Caco-2 (cell line): ENCODE measurements at regions of chr4 and their contacts with region 1.

Region 1: DNA sequence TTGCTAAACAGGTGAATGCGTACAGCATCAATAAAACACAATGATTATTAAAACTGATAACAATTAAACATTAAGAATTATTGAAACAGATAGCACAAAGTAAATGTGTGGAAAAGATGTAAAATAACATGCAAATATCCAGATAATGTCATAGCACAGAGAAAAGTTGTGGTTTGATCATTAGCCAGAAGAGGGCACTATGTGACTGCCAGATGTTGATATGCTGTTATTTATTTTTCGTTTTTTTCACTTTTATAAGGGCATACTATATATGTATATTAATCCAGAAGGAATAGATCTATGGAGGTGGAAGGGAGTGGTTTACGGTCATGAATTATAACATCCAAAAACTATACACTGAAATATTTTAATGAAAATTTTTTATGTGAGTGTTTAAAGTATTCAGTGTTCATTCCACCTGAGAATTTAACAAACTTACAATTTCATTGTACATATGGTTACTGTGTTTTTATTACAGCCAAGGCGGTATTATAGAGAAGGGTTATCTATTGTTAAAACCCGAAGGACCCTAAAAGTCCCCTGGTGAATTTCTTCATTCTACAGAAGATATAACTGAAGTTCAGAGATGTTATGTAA is 211.9 kb upstream of the UGT8 start:
- DNase-seq: peak in 1 of 2 experiments; percentile 24
- H3K4me3 ChIP-seq: no peak overlapping the region
- H3K4me3 Mint-ChIP-seq: no peak overlapping the region
- H3K27ac Mint-ChIP-seq: no peak overlapping the region
- H3K4me1 ChIP-seq: no peaks in the 10 kb centered on the region
- H3K4me1 Mint-ChIP-seq: no peaks in the 10 kb centered on the region
- H3K27me3 ChIP-seq: no peaks in the 10 kb centered on the region
- H3K27me3 Mint-ChIP-seq: no peaks in the 10 kb centered on the region
- CTCF ChIP-seq: peak; percentile 56 to 65

Region 2: GRCh38 chr4:113547487-113548042 is 839.2 kb before region 1 on chr4:
- CTCF ChIA-PET with region 1: no interaction called
- POLR2A ChIA-PET with region 1: no interaction called
- intact Hi-C with region 1: loop called (anchors 10 kb)
- DNase-seq: peak; percentile 92 to 93
- H3K4me3 ChIP-seq: no peak overlapping the region
- H3K4me3 Mint-ChIP-seq: no peak overlapping the region
- H3K27ac Mint-ChIP-seq: no peak overlapping the region
- H3K4me1 ChIP-seq: peaks cover 9% of the 10 kb centered on the region; the same call in 1 of the 2 replicates
- H3K4me1 Mint-ChIP-seq: no peaks in the 10 kb centered on the region
- H3K27me3 ChIP-seq: no peaks in the 10 kb centered on the region
- H3K27me3 Mint-ChIP-seq: no peaks in the 10 kb centered on the region
- CTCF ChIP-seq: peak; percentile 91 to 93

Region 3: DNA sequence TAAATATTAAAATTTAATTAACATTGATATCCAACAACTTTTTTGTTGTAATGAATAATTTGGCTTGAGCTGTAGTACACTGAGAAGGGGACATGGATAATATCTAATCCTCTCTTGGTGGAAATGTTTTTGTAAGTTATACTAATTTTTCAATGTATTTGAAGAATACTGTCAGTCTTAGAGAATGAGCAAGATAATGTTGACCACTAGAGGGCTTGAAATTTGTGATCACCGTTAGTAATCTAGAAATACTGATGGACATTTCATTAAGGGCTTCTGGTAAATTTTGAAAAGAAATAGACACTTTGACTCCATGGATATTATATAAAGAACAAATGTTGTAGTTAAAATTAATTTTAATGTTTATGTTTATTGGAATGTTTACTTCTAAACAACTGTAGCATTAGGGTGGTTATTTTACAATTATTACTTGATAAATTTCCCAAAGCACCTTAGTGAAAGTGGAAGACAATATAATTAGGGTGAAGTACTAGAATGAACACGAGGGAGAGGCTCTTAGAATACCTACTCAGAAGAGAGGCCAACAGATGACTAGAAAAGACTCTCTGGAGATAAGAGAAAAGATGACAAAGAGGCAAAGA is 605.2 kb before region 1 on chr4:
- CTCF ChIA-PET with region 1: no interaction called
- POLR2A ChIA-PET with region 1: no interaction called
- intact Hi-C with region 1: loop called (anchors 5 kb)
- DNase-seq: no peak
- H3K4me3 ChIP-seq: no peak overlapping the region
- H3K4me3 Mint-ChIP-seq: no peak overlapping the region
- H3K27ac Mint-ChIP-seq: no peak overlapping the region
- H3K4me1 ChIP-seq: no peaks in the 10 kb centered on the region
- H3K4me1 Mint-ChIP-seq: no peaks in the 10 kb centered on the region
- H3K27me3 ChIP-seq: no peaks in the 10 kb centered on the region
- H3K27me3 Mint-ChIP-seq: no peaks in the 10 kb centered on the region
- CTCF ChIP-seq: peak; percentile 36 to 49

Region 4: DNA sequence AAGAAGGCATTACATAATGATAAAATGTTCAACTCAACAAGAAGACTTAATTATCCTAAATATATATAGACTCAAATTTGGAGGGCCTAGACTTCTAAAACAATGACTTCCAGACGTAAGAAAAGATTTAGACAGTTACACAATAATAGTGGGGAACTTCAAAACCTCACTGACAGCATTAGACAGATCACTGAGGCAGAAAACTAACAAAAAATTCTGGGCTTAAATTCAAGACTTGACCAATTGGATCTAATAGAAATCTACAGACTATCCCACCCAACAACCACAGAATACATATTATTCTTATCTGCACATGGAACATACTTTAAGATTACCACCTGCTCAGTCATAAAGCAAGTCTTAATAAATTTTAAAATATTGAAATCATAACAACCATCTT is 314.0 kb before region 1 on chr4:
- CTCF ChIA-PET with region 1: no interaction called
- POLR2A ChIA-PET with region 1: no interaction called
- intact Hi-C with region 1: loop called (anchors 5 kb)
- DNase-seq: no peak
- H3K4me3 ChIP-seq: no peak overlapping the region
- H3K4me3 Mint-ChIP-seq: no peak overlapping the region
- H3K27ac Mint-ChIP-seq: no peak overlapping the region
- H3K4me1 ChIP-seq: no peaks in the 10 kb centered on the region
- H3K4me1 Mint-ChIP-seq: no peaks in the 10 kb centered on the region
- H3K27me3 ChIP-seq: no peaks in the 10 kb centered on the region
- H3K27me3 Mint-ChIP-seq: no peaks in the 10 kb centered on the region
- CTCF ChIP-seq: no peak

Region 5: GRCh38 chr4:114659386-114660008 is 272.8 kb after region 1 on chr4:
- CTCF ChIA-PET with region 1: interaction called, 5 read pairs
- POLR2A ChIA-PET with region 1: no interaction called
- intact Hi-C with region 1: loop called (anchors 1 kb)
- DNase-seq: peak; percentile 71 to 75
- H3K4me3 ChIP-seq: no peak overlapping the region
- H3K4me3 Mint-ChIP-seq: no peak overlapping the region
- H3K27ac Mint-ChIP-seq: no peak overlapping the region
- H3K4me1 ChIP-seq: peaks cover 7% of the 10 kb centered on the region; the same call in 1 of the 2 replicates
- H3K4me1 Mint-ChIP-seq: no peaks in the 10 kb centered on the region
- H3K27me3 ChIP-seq: no peaks in the 10 kb centered on the region
- H3K27me3 Mint-ChIP-seq: no peaks in the 10 kb centered on the region
- CTCF ChIP-seq: peak; percentile 70 to 84

Region 6: GRCh38 chr4:114807759-114808404 is 421.1 kb after region 1 on chr4:
- CTCF ChIA-PET with region 1: no interaction called
- POLR2A ChIA-PET with region 1: no interaction called
- intact Hi-C with region 1: loop called (anchors 5 kb)
- DNase-seq: peak; percentile 51 to 66
- H3K4me3 ChIP-seq: no peak overlapping the region
- H3K4me3 Mint-ChIP-seq: peak overlapping the region; percentile 32
- H3K27ac Mint-ChIP-seq: no peak overlapping the region
- H3K4me1 ChIP-seq: no peaks in the 10 kb centered on the region
- H3K4me1 Mint-ChIP-seq: peaks cover 6% of the 10 kb centered on the region
- H3K27me3 ChIP-seq: no peaks in the 10 kb centered on the region
- H3K27me3 Mint-ChIP-seq: peaks cover 5% of the 10 kb centered on the region
- CTCF ChIP-seq: peak; percentile 81 to 89